Upper lobe of right lung (tissue), 1 donor: ENCODE measurements at regions of chr1 and their contacts with region 1.

Region 1: DNA sequence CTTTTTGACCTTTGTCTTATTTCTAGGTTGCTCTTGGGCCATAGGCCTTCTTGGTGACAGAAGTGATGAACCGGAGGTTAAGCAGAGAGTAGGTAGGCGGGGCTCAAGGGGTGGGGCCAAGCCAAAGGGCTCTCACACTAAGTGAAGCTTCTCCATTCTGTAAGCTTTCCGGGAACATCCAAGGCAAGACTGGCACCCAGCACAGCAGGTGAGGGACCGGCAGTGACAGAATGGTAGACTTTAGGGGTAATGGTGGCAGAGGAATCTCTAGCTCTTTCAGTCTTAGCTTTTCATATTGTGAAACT is at the start of gene TNFAIP8L2:
- DNase-seq: peak; percentile 81
- ATAC-seq: peak; percentile 86
- H3K4me3 ChIP-seq: peak within 1 kb of the TSS; percentile 52
- H3K27ac ChIP-seq: peak within 1 kb of the TSS; percentile 67
- H3K4me1 ChIP-seq: peaks cover 2% of the 10 kb centered on the region
- H3K27me3 ChIP-seq: no peaks in the 10 kb centered on the region
- CTCF ChIP-seq: no peak
- total RNA-seq, gene TNFAIP8L2: 10.3 TPM

Region 2: DNA sequence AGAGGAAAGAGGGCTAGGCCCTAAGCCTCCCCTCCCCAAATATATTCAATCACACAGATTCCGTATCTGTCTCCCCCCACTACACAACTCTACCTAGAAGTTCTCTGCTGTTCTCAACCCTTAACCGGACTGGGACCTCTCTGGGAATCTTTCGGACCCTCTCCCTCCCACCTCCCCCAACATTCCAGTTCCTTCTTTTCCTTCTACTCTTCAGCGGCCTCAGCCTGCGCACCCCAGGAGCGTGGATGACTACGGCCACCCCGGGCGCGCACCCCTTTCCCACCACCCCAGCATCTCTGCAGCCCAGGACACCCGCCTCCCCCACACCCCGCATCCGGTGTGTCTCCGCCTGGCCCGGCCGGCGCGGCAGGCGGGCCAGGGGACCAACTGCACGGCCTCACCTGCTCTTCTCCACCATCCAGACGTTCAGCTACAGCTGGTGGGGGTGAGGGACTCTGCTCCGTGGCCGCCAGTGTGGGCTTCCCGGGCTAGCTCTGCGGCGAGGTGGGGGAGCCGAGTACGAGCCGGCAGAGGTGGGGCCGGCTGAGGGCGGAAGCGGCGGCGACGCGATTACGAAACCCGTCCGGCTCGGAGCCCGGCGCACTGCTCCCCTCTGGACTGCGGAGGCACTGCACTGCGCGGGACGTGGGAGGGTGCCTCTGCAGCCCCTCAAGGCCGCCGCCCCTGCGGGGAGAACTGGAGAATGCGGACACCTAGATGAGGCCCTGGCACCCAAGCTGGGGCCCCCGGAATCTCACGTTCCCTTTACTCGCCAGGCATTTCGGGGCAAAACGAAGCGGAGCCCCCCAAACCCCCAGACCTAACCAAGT is 97.2 kb before region 1 on chr1 and contains the start of gene CDC42SE1:
- intact Hi-C with region 1: no loop called
- DNase-seq: peak; percentile 94
- ATAC-seq: peak; percentile 94
- H3K4me3 ChIP-seq: peak within 1 kb of the TSS; percentile 86
- H3K27ac ChIP-seq: peak within 1 kb of the TSS; percentile 89
- H3K4me1 ChIP-seq: peaks cover 37% of the 10 kb centered on the region
- H3K27me3 ChIP-seq: no peaks in the 10 kb centered on the region
- CTCF ChIP-seq: peak; percentile 89
- total RNA-seq, gene CDC42SE1: 105 TPM

Region 3: DNA sequence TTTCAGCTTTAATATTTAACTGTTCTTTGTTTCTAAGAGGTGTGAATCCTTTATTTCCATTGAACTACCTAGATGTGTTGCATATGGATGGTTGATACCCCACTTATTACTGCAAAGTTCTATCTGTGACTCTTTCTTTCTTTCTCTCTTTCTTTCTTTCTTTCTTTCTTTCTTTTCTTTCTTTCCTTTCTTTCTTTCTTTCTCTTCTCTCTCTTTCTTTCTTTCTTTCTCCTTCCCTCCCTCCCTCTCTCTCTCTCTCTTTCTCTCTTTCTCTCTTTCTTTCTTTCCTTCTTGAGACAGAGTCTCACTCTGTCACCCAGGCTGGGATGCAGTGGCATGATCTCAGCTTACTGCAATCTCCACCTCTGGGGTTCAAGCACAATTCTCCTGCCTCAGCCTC is 51.8 kb before region 1 on chr1:
- intact Hi-C with region 1: loop called (anchors 5 kb)
- DNase-seq: no peak
- ATAC-seq: no peak
- H3K4me3 ChIP-seq: no peak overlapping the region
- H3K27ac ChIP-seq: no peak overlapping the region
- H3K4me1 ChIP-seq: no peaks in the 10 kb centered on the region
- H3K27me3 ChIP-seq: no peaks in the 10 kb centered on the region
- CTCF ChIP-seq: no peak

Region 4: GRCh38 chr1:151391079-151391563 is 234.7 kb after region 1 on chr1:
- intact Hi-C with region 1: no loop called
- DNase-seq: no peak
- ATAC-seq: no peak
- H3K4me3 ChIP-seq: no peak overlapping the region
- H3K27ac ChIP-seq: no peak overlapping the region
- H3K4me1 ChIP-seq: no peaks in the 10 kb centered on the region
- H3K27me3 ChIP-seq: no peaks in the 10 kb centered on the region
- CTCF ChIP-seq: no peak